ENCODE measurements at regions of chr13 and their contacts with region 1.

Region 1: GRCh38 chr13:51070005-51070649 is 40.9 kb downstream of the C13orf42 start:
- DNase-seq: peak; percentile 84 to 95
- ATAC-seq: peak; percentile 91
- H3K4me3 ChIP-seq: no peak overlapping the region
- H3K27ac ChIP-seq: no peak overlapping the region
- H3K4me1 ChIP-seq: no peaks in the 10 kb centered on the region
- H3K27me3 ChIP-seq: no peaks in the 10 kb centered on the region

Region 2: DNA sequence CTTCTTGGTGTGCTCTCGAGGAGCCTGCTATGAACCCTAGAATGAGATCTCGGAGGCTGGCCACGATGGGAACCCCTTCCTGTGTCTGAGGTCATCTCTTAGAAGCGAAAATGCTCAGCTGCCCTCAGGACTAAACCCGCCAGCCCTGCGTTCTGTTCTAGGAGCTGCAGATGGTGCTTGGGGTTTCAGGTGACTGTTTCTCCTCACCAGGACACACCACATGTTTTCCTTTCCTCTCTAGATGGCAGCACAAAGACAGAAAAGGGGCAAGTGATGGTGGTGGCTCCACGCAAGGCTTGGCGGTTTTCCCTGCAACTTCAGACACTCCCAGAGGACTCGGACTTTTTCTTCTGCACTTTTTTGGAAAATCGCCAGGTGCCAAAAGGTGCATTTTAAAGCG is 100.4 kb before region 1 on chr13:
- intact Hi-C with region 1: loop called (anchors 2 kb)
- DNase-seq: no peak
- ATAC-seq: no peak
- H3K4me3 ChIP-seq: no peak overlapping the region
- H3K27ac ChIP-seq: no peak overlapping the region
- H3K4me1 ChIP-seq: no peaks in the 10 kb centered on the region
- H3K27me3 ChIP-seq: no peaks in the 10 kb centered on the region

Region 3: GRCh38 chr13:51222037-51222685 is 152.0 kb after region 1 on chr13 and contains the start of gene FAM124A:
- intact Hi-C with region 1: no loop called
- DNase-seq: peak; percentile 51 to 87
- ATAC-seq: peak; percentile 85
- H3K4me3 ChIP-seq: peak within 1 kb of the TSS; percentile 12 to 80
- H3K27ac ChIP-seq: no peak within 1 kb of the TSS
- H3K4me1 ChIP-seq: no peaks in the 10 kb centered on the region
- H3K27me3 ChIP-seq: no peaks in the 10 kb centered on the region
- total RNA-seq, gene FAM124A: 7.2 to 9.2 TPM

Measured in aorta (tissue), 5 donors.